Transverse colon (tissue), 4 donors: ENCODE measurements at regions of chr16 and their contacts with region 1.

Region 1: GRCh38 chr16:25838724-25839186 is 147.0 kb downstream of the HS3ST4 start:
- DNase-seq: peak; percentile 7
- H3K4me3 ChIP-seq: no peak overlapping the region
- H3K27ac ChIP-seq: no peak overlapping the region
- H3K4me1 ChIP-seq: peaks cover 0 to 6% (median 3%) of the 10 kb centered on the region in 4 donors
- H3K27me3 ChIP-seq: no peaks in the 10 kb centered on the region
- CTCF ChIP-seq: peak; percentile 68 to 75 (median 73)
- EP300 ChIP-seq: no peak
- POLR2A ChIP-seq: no peak

Region 2: DNA sequence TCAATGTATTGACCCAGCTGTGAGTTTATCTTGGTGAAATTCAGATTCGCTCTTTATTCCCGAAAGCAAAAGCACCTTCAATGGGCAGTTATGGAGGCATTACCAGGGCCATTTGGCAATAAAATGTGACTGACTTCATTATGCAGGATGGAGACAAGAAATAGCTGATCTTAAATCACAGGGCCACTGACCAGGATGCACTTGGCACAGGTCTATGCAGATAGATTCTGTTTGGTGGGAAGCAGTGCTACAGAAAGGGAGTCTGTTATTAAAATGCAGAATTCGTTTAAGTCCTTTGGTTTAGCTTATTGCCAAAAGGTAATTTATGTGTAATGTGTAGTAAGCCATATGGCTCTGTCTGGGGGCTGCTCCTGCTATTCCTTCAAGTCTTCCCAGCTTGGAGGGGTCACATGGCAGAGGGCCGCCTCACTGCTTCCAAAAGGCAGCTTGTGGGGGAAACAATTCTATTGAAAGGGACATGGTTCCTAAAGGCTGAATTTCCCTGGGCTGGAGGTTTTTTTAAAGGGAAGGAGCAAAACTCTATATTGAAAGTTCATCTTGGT is 92.8 kb after region 1 on chr16:
- in situ Hi-C with region 1: no loop called
- intact Hi-C with region 1: no loop called
- DNase-seq: no peak
- H3K4me3 ChIP-seq: no peak overlapping the region
- H3K27ac ChIP-seq: no peak overlapping the region
- H3K4me1 ChIP-seq: no peaks in the 10 kb centered on the region
- H3K27me3 ChIP-seq: no peaks in the 10 kb centered on the region
- CTCF ChIP-seq: no peak
- EP300 ChIP-seq: no peak
- POLR2A ChIP-seq: no peak

Region 3: GRCh38 chr16:27109666-27110523 is 1271.1 kb after region 1 on chr16:
- in situ Hi-C with region 1: loop called in 3 of 4 experiments (anchors 25 kb)
- intact Hi-C with region 1: no loop called
- DNase-seq: peak; percentile 90
- H3K4me3 ChIP-seq: peak overlapping the region in 3 of 4 donors; percentile 8 to 39 (median 17)
- H3K27ac ChIP-seq: peak overlapping the region; percentile 70 to 83 (median 78)
- H3K4me1 ChIP-seq: peaks cover 5 to 25% (median 9%) of the 10 kb centered on the region in 4 donors
- H3K27me3 ChIP-seq: no peaks in the 10 kb centered on the region
- CTCF ChIP-seq: peak; percentile 60 to 96 (median 88)
- EP300 ChIP-seq: no peak
- POLR2A ChIP-seq: no peak